ENCODE measurements at regions of chr19 and their contacts with region 1.

Region 1: DNA sequence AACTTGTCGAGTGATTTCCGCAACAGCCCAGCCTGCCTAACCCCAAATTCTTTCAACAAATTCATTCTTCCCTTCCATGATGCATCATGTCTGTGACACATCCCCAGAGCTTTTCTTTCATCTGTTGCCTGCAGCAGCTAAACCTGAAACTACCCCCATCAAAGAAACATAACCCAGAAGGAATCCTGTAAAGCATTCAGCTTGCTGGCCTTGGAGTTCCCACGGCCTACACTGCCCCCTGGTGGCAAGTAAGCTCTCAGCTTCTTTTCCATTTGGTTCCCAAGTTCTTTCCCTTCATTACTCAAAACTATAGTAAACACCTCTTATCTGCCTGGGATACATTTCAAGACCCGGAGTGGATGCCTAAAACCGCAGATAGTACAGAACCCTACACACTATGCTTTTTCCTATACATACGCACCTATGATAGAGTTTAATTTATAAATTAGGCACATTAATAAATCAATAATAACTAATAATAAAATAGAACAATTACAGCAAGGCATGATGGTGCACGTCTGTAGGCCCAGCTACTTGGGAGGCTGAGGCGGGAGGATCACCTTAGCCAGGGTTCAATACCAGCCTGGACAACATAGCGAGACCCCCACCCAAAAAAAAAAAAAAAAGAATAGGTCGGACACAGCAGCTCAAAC is 7.4 kb downstream of the ETHE1 start:
- DNase-seq: peak; percentile 77
- ATAC-seq: peak; percentile 58
- H3K4me3 Mint-ChIP-seq: no peak overlapping the region
- H3K27ac Mint-ChIP-seq: no peak overlapping the region
- H3K4me1 Mint-ChIP-seq: peaks cover 10% of the 10 kb centered on the region
- H3K27me3 Mint-ChIP-seq: no peaks in the 10 kb centered on the region

Region 2: DNA sequence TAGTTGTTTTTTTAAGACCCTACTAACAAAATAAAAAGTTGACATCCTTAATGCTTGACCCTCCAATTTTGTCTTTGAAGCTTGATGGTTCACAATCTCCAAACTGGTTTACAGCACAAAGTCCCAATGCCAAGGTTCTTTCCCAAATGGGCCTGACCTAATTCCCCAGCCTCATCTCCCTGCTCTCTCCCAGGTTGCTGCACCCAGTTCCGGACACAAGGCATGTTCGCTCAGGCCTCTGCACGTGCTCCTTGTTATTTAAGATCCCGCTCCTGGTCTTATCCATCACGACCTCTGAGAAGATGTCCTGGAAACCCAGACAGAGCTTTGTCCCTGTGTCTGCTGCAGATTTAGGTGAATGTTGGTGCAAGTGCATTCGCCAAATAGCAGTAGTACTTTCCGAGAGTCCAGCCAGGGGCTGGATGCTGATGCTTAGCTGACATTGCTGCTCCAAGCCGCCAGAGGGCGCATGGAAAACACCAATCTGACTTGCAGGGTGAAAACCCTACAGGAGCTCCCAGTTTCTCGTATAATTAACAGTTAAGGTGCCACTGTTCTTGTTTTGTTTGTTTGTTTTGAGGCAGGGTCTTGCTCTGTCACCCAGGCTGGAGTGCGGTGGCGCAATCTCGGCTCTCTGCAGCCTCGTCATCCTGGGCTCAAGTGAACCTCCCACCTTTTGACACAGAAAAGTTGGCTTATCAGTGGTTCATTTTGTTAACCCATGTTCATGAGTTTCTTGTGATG is 72.6 kb before region 1 on chr19:
- POLR2A ChIA-PET with region 1: interaction called, 31 read pairs
- DNase-seq: peak; percentile 80
- ATAC-seq: peak; percentile 83
- H3K4me3 Mint-ChIP-seq: no peak overlapping the region
- H3K27ac Mint-ChIP-seq: peak overlapping the region; percentile 4
- H3K4me1 Mint-ChIP-seq: peaks cover 11% of the 10 kb centered on the region
- H3K27me3 Mint-ChIP-seq: no peaks in the 10 kb centered on the region

Region 3: GRCh38 chr19:43498233-43498842 is 21.2 kb before region 1 on chr19:
- POLR2A ChIA-PET with region 1: no interaction called
- DNase-seq: no peak
- ATAC-seq: no peak
- H3K4me3 Mint-ChIP-seq: no peak overlapping the region
- H3K27ac Mint-ChIP-seq: no peak overlapping the region
- H3K4me1 Mint-ChIP-seq: peaks cover 8% of the 10 kb centered on the region
- H3K27me3 Mint-ChIP-seq: no peaks in the 10 kb centered on the region